Aorta (tissue), 5 donors: ENCODE measurements at regions of chr2 and their contacts with region 1.

Region 1: DNA sequence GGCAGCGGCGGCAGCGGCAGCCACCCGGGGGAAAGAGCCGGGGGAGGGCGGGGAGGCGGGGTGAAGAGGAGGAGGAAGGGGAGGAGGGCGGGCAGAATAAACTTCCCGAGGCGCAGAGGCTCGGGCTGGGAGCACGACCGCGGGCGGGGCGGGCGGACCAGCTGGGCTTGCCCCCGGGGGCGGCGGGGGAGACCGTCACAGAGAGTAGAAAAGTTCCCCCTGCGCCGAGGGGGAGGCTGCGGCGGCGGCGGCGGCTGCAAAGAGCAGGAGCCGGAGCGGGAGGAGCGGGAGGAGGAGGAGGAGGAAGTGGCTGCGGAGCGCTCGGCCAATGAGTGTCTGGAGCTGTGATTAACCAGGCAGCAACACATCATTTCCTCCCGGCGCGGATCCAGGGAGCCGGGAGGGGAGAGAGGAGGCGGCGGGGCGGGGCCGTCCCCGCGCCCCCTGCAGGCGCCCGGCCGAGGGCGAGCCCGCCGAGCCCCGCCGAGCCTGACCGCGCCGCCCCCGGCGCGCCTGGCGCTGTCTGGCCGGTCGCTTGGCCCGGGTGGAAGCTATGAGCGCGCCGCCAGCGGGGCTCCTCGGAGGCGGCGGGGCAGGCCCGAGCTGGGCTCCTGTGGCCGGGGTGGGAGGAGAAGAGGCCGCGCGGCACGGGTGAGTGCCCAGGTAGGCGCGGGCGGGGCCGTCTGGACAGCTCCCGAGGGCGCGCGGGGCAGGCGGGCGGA is at the start of gene ACVR1:
- DNase-seq: peak; percentile 98
- ATAC-seq: peak; percentile 95
- H3K4me3 ChIP-seq: peak within 1 kb of the TSS; percentile 80 to 99
- H3K27ac ChIP-seq: peak within 1 kb of the TSS; percentile 79 to 91
- H3K4me1 ChIP-seq: peaks cover 4 to 12% of the 10 kb centered on the region in 2 donors
- H3K27me3 ChIP-seq: no peaks in the 10 kb centered on the region
- total RNA-seq, gene ACVR1: 47.8 to 53.4 TPM

Region 2: DNA sequence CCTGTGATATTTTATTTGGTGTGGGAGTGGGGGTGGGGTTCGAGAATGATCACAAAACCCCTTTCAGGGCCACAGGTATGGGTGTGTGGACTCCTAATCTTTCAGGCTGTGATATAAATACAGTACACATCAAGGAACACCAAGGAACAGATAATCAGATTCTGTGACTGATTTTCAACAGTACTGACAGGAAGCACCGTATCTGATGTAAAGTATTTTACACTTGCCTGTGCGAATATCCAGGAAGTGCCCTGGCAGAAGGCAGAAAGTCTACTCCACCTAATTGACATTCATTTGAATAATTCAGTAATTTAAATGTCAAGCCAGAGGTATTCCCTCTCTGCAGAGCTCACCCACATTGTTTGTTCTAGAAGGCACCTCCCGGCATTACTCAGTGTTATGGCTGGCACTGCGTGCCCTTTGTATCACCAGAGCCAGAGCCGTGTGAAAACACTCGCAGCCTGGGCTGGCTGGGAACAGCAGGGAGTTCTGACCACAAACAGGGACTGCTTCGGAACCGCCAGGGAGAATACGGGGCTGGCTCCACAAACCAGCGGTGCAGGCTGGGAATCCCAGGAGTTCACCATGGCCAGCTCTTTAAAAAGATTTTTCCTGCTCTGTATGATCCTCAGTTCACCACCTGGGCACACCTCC is 91.9 kb before region 1 on chr2:
- intact Hi-C with region 1: loop called (anchors 2 kb)
- DNase-seq: peak; percentile 81 to 88
- ATAC-seq: peak; percentile 80
- H3K4me3 ChIP-seq: peak overlapping the region in 1 of 2 donors; percentile 22
- H3K27ac ChIP-seq: peak overlapping the region; percentile 69 to 74
- H3K4me1 ChIP-seq: peaks cover 13 to 32% of the 10 kb centered on the region in 2 donors
- H3K27me3 ChIP-seq: no peaks in the 10 kb centered on the region

Region 3: GRCh38 chr2:157830696-157831570 is 45.3 kb before region 1 on chr2:
- intact Hi-C with region 1: loop called (anchors 5 kb)
- DNase-seq: no peak
- ATAC-seq: peak; percentile 88
- H3K4me3 ChIP-seq: no peak overlapping the region
- H3K27ac ChIP-seq: peak overlapping the region; percentile 30 to 83
- H3K4me1 ChIP-seq: peaks cover 3 to 12% of the 10 kb centered on the region in 2 donors
- H3K27me3 ChIP-seq: no peaks in the 10 kb centered on the region